ENCODE measurements at regions of chr4 and their contacts with region 1.

Region 1: GRCh38 chr4:41661442-41662076 is 87.0 kb downstream of the PHOX2B start:
- DNase-seq: peak; percentile 62
- H3K4me3 ChIP-seq: no peak overlapping the region
- H3K27ac ChIP-seq: no peak overlapping the region
- H3K4me1 ChIP-seq: no peaks in the 10 kb centered on the region
- H3K27me3 ChIP-seq: no peaks in the 10 kb centered on the region

Region 2: DNA sequence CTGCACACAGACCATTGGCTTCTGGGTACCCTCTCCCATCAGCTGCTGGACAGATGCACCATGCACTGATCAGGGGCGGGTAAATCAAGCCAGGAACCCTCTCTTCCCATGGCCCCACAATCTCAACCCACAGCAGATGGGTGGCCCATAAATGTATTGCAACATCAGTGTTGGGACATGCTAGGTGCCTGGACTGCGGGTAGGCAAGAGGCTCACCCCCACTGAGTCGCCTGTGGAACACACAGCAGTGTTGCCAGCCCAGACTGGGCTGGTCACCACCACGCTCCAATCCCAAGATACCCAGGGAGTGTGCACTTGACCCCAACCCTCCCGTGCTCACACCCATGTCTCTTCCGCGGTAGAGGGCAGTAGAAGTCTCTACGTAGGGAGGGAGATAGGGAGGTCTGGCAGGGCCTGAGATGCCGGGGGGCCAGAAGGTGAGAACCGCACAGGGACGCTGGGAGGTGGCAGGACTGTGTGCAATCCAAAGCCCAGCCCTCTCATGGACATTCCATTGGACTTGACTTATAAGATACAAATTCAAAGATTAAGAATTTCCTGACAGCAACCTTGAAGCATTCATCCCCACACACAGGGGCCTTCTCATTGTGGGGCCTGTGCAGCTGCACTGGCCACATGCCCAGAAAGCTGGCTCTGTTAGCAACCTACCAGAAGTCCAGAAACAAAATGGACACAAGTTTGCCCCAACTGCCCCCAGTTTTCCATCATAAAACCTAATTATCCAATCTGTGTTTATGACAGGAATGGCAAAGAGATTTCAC is 728.1 kb before region 1 on chr4:
- in situ Hi-C with region 1: loop called (anchors 25 kb)
- DNase-seq: no peak
- H3K4me3 ChIP-seq: no peak overlapping the region
- H3K27ac ChIP-seq: no peak overlapping the region
- H3K4me1 ChIP-seq: no peaks in the 10 kb centered on the region
- H3K27me3 ChIP-seq: no peaks in the 10 kb centered on the region

Region 3: GRCh38 chr4:41287050-41287449 is 374.5 kb before region 1 on chr4:
- in situ Hi-C with region 1: loop called (anchors 5 kb)
- DNase-seq: no peak
- H3K4me3 ChIP-seq: no peak overlapping the region
- H3K27ac ChIP-seq: no peak overlapping the region
- H3K4me1 ChIP-seq: peaks cover 8% of the 10 kb centered on the region
- H3K27me3 ChIP-seq: no peaks in the 10 kb centered on the region